Posterior cingulate gyrus (tissue), 11 donors: ENCODE measurements at regions of chr4 and their contacts with region 1.

Region 1: GRCh38 chr4:137124278-137124932 is 407.9 kb downstream of the PCDH18 start:
- DNase-seq: no peak

Region 2: GRCh38 chr4:137861682-137862081 is 737.3 kb after region 1 on chr4:
- intact Hi-C with region 1: loop called (anchors 2 kb)
- DNase-seq: no peak

Region 3: DNA sequence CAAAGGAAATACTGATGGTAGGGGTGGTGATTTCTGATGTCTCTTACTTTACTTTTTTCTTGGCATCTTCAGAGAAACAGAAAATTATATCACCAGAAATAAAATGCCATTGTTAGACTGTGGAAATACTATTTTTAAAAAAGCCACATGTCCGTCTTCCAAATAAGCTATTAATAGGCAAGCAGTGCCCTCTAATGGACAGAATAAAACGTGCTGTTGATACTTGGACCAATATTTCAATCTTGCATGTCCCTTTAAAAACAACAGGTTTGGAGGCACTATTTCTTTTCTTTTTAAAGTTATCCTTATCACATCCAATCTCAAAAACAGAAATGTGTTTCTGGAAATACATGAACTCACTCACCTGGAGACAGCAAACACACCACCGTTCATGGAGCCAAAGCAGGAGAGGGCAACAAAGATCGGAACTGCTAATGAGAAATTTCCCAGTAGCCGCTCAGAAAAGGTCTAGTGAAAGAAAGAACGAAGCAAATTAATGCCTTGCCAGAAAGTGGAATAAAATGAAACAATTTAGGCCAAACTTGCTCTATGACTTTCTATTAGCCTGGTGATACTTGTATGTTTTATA is 1058.5 kb after region 1 on chr4:
- intact Hi-C with region 1: loop called (anchors 10 kb)
- DNase-seq: no peak